Psoas muscle (tissue), 8 donors: ENCODE measurements at regions of chr2 and their contacts with region 1.

Region 1: GRCh38 chr2:26144953-26145680 is 27.8 kb upstream of the GAREM2 start:
- DNase-seq: peak; percentile 59 to 66
- ATAC-seq: peak; percentile 78 to 83 (median 82)
- H3K4me3 ChIP-seq: no peak overlapping the region
- H3K27ac ChIP-seq: no peak overlapping the region
- H3K4me1 ChIP-seq: no peaks in the 10 kb centered on the region
- H3K27me3 ChIP-seq: no peaks in the 10 kb centered on the region
- CTCF ChIP-seq: peak; percentile 88

Region 2: GRCh38 chr2:25851740-25852503 is 293.2 kb before region 1 on chr2:
- intact Hi-C with region 1: loop called in 1 of 2 experiments (anchors 1 kb)
- DNase-seq: no peak
- ATAC-seq: peak; percentile 75 to 87 (median 83)
- H3K4me3 ChIP-seq: peak overlapping the region; percentile 12
- H3K27ac ChIP-seq: peak overlapping the region; percentile 73
- H3K4me1 ChIP-seq: peaks cover 45% of the 10 kb centered on the region
- H3K27me3 ChIP-seq: no peaks in the 10 kb centered on the region
- CTCF ChIP-seq: peak; percentile 74

Region 3: DNA sequence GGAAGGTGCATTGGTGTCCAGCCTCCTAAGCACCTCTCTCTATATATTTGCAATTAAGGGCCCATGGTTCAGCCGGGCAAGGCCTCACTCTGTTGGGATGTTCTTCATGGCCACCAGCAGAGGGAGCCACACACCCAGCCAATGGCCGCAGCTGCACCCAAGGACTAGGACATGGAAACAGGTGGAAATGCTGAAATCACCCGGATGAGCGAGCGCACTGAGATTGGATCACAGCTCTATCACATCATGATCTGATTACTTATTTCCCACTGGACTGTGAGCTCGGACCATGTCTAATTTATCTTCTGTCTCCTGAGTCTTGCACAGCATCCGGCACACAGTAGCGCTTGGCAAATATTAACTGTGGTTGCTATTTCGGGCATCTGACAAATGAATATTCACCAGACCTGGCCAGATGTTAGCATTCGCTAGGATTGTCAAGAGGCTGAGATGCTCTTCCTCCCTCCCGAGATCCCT is 194.0 kb before region 1 on chr2:
- intact Hi-C with region 1: loop called in 1 of 2 experiments (anchors 2 kb)
- DNase-seq: peak; percentile 70 to 90
- ATAC-seq: peak; percentile 96 to 99 (median 98)
- H3K4me3 ChIP-seq: peak overlapping the region; percentile 37
- H3K27ac ChIP-seq: peak overlapping the region; percentile 46
- H3K4me1 ChIP-seq: no peaks in the 10 kb centered on the region
- H3K27me3 ChIP-seq: no peaks in the 10 kb centered on the region
- CTCF ChIP-seq: peak; percentile 98

Region 4: GRCh38 chr2:26088032-26088643 is 57.0 kb before region 1 on chr2:
- intact Hi-C with region 1: loop called (anchors 2 to 5 kb)
- DNase-seq: no peak
- ATAC-seq: peak; percentile 57 to 81 (median 65)
- H3K4me3 ChIP-seq: no peak overlapping the region
- H3K27ac ChIP-seq: peak overlapping the region; percentile 70
- H3K4me1 ChIP-seq: peaks cover 42% of the 10 kb centered on the region
- H3K27me3 ChIP-seq: no peaks in the 10 kb centered on the region
- CTCF ChIP-seq: peak; percentile 83